ENCODE measurements at regions of chr16 and their contacts with region 1.

Region 1: GRCh38 chr16:86570558-86571529 is 4.2 kb downstream of the FOXC2 start:
- DNase-seq: no peak
- ATAC-seq: no peak
- H3K4me3 ChIP-seq: no peak overlapping the region
- H3K4me1 ChIP-seq: no peaks in the 10 kb centered on the region
- CTCF ChIP-seq: no peak

Region 2: GRCh38 chr16:86772671-86773353 is 202.0 kb after region 1 on chr16:
- intact Hi-C with region 1: loop called in 1 of 2 experiments (anchors 5 kb)
- DNase-seq: no peak
- ATAC-seq: no peak
- H3K4me3 ChIP-seq: no peak overlapping the region
- H3K4me1 ChIP-seq: no peaks in the 10 kb centered on the region
- CTCF ChIP-seq: no peak

Measured in mucosa of descending colon (tissue), 3 donors.